Mammary epithelial cell (primary cell): ENCODE measurements at regions of chr1 and their contacts with region 1.

Region 1: GRCh38 chr1:108892356-108893140 is 15.8 kb downstream of the GPSM2 start:
- DNase-seq: no peak
- H3K4me3 ChIP-seq: no peak overlapping the region
- H3K27ac ChIP-seq: peak overlapping the region; percentile 12
- H3K4me1 ChIP-seq: peaks cover 29% of the 10 kb centered on the region
- H3K27me3 ChIP-seq: no peaks in the 10 kb centered on the region
- CTCF ChIP-seq: no peak

Region 2: DNA sequence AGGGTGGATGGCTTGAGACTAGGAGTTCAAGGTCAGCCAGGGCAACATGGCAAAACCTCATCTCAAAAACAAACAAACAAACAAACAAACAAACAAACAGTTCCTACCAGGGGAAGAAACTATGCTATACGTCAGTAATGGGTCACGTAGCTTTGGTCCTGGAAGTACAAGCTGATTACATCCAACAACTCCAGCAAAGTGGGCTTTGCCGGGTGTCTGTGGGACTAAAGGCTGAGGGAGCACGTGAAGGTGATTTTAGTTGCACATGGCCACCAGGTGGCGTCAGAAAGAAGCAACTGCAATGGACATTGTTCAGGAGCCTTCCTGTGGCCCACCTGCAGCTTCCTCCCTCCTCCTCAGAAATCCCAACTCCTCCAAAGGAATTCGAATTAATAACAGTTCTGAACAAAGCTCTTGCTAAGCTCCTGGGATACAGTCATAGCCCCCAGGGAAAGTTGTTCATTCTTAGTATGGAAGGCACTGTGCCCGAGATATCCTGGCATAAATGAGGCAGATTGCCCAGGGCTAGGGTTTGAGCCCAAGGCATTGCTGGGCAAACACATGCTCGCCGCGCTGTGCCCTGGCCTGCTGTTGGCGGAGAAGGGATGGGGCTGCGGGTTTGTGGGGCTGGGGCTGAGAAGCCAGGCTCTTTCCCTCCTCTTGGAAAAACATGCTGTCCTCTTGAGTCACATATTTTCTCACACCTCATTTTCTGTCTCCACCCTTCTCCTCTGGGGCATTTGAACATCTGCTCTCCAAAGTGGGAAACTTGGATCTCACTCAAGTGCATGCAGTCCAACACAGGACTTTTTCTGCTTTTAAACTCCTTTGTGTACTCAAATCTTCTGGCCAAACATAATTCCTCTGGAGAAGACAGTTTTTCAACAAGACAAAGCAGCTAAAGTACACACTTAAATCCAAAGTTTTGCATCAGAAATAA is 64.3 kb before region 1 on chr1:
- CTCF ChIA-PET with region 1: interaction called, 3 read pairs
- dilution Hi-C with region 1: no loop called
- in situ Hi-C with region 1: loop called (anchors 5 kb)
- intact Hi-C with region 1: no loop called
- DNase-seq: peak; percentile 96
- H3K4me3 ChIP-seq: peak overlapping the region in 1 of 3 experiments; percentile 1
- H3K27ac ChIP-seq: peak overlapping the region; percentile 90
- H3K4me1 ChIP-seq: peaks cover 34% of the 10 kb centered on the region
- H3K27me3 ChIP-seq: no peaks in the 10 kb centered on the region
- CTCF ChIP-seq: peak; percentile 62 to 80